ENCODE measurements at regions of chr1 and their contacts with region 1.

Region 1: GRCh38 chr1:147273409-147274336 is 31.2 kb downstream of the CHD1L start:
- DNase-seq: no peak
- H3K4me3 ChIP-seq: no peak overlapping the region
- H3K27ac ChIP-seq: peak overlapping the region in 3 of 4 donors; percentile 37 to 56 (median 52)
- H3K4me1 ChIP-seq: peaks cover 0 to 13% (median 10%) of the 10 kb centered on the region in 4 donors
- H3K27me3 ChIP-seq: no peaks in the 10 kb centered on the region
- CTCF ChIP-seq: peak; percentile 37 to 48 (median 48)
- EP300 ChIP-seq: no peak
- POLR2A ChIP-seq: no peak

Region 2: GRCh38 chr1:145740266-145740665 is 1533.4 kb before region 1 on chr1:
- intact Hi-C with region 1: no loop called
- DNase-seq: no peak
- H3K4me3 ChIP-seq: no peak overlapping the region
- H3K27ac ChIP-seq: no peak overlapping the region
- H3K4me1 ChIP-seq: no peaks in the 10 kb centered on the region
- H3K27me3 ChIP-seq: no peaks in the 10 kb centered on the region
- CTCF ChIP-seq: no peak
- EP300 ChIP-seq: no peak
- POLR2A ChIP-seq: no peak

Region 3: DNA sequence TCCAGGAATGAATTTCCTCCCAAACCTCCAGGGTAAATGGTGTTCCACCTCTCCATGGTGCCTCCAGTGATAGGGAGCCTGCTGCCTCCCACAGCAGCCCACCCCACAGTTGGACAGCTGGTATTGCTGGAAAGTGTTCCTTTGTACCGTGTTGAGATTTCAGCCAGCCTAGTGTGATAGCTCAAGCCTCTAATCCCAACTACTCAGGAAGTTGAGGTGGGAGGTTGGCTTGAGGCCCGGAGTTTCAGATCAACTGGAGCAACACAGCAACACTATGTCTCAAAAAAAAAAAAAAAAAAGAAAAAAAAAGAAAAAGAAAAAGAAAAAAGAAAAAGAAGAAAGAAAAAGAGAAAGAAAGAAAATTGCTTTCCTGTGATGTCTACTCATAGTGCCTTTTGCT is 64.9 kb after region 1 on chr1:
- intact Hi-C with region 1: no loop called
- DNase-seq: no peak
- H3K4me3 ChIP-seq: no peak overlapping the region
- H3K27ac ChIP-seq: no peak overlapping the region
- H3K4me1 ChIP-seq: no peaks in the 10 kb centered on the region
- H3K27me3 ChIP-seq: peaks cover 0 to 7% (median 0%) of the 10 kb centered on the region in 4 donors
- CTCF ChIP-seq: no peak
- EP300 ChIP-seq: no peak
- POLR2A ChIP-seq: no peak

Region 4: GRCh38 chr1:147389532-147390524 is 116.2 kb after region 1 on chr1:
- intact Hi-C with region 1: loop called (anchors 5 kb)
- DNase-seq: no peak
- H3K4me3 ChIP-seq: no peak overlapping the region
- H3K27ac ChIP-seq: no peak overlapping the region
- H3K4me1 ChIP-seq: no peaks in the 10 kb centered on the region
- H3K27me3 ChIP-seq: peaks cover 0 to 11% (median 0%) of the 10 kb centered on the region in 4 donors
- CTCF ChIP-seq: peak; percentile 34 to 70 (median 56)
- EP300 ChIP-seq: no peak
- POLR2A ChIP-seq: no peak

Measured in esophagus muscularis mucosa (tissue), 4 donors.